PC-3 (cell line): ENCODE measurements at regions of chr5 and their contacts with region 1.

Region 1: DNA sequence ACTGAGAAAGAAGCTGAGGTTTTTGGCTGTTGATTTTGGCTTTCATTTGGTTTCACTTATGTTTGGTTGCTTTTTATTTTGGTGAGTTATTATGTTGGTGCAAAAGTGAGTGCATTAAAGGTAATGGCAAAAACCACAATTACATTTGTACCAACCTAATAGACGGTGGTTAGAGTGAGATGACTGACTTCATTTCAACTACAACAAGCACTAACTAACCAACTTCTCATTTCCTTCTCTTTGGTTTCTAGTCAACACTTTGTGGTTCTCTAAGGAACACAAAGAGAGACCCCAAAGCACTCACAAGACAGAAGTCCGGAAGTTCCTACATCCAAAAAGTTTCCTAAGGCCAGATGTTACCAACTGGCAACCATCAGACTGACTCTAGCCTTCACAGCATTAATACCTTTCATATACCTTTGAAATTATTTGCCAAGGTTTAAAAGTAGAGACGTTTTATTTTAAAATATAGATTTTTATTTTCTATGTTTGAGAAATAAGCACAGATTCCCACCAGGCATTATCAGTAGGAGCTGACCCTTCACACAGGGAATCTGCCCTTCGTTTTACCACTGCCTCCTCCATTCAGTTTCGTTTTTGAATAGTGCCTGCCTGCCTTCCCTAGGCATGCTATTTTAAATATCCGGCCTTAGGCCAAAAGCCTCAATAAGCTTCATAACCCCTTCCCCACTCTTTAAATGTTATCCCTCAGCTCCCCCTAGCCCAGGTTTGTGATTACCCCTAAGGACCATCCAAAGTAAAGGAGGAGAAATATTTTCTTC is 301.1 kb upstream of the PTGER4 start:
- DNase-seq: no peak
- ATAC-seq: no peak
- H3K4me3 ChIP-seq: no peak overlapping the region
- H3K27ac ChIP-seq: no peak overlapping the region
- H3K4me1 ChIP-seq: peaks cover 30% of the 10 kb centered on the region
- H3K27me3 ChIP-seq: no peaks in the 10 kb centered on the region
- CTCF ChIP-seq: no peak

Region 2: GRCh38 chr5:40306869-40307460 is 71.6 kb before region 1 on chr5:
- CTCF ChIA-PET with region 1: no interaction called
- POLR2A ChIA-PET with region 1: interaction called, 14 read pairs
- intact Hi-C with region 1: no loop called
- DNase-seq: no peak
- ATAC-seq: no peak
- H3K4me3 ChIP-seq: no peak overlapping the region
- H3K27ac ChIP-seq: no peak overlapping the region
- H3K4me1 ChIP-seq: no peaks in the 10 kb centered on the region
- H3K27me3 ChIP-seq: no peaks in the 10 kb centered on the region
- CTCF ChIP-seq: no peak